ENCODE measurements at regions of chr17 and their contacts with region 1.

Region 1: DNA sequence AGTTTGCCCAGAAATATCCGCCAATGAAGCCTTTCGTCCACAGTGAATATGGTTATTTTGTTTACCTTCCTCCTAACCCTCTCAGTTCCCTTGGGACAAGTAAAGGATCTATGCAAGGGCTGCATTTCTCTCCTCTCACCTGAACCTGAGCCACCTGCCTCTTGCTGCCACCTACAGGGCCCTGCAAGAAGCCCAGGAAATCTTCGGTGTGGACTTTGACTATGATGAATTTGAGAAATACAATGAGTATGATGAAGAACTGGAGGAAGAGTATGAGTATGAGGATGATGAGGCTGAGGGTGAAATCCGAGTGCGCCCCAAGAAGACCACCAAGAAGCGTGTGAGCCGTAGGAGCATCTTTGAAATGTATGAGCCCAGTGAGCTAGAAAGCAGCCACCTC is 14.0 kb downstream of the SUPT6H start:
- DNase-seq: no peak
- CTCF ChIP-seq: peak; percentile 49

Region 2: DNA sequence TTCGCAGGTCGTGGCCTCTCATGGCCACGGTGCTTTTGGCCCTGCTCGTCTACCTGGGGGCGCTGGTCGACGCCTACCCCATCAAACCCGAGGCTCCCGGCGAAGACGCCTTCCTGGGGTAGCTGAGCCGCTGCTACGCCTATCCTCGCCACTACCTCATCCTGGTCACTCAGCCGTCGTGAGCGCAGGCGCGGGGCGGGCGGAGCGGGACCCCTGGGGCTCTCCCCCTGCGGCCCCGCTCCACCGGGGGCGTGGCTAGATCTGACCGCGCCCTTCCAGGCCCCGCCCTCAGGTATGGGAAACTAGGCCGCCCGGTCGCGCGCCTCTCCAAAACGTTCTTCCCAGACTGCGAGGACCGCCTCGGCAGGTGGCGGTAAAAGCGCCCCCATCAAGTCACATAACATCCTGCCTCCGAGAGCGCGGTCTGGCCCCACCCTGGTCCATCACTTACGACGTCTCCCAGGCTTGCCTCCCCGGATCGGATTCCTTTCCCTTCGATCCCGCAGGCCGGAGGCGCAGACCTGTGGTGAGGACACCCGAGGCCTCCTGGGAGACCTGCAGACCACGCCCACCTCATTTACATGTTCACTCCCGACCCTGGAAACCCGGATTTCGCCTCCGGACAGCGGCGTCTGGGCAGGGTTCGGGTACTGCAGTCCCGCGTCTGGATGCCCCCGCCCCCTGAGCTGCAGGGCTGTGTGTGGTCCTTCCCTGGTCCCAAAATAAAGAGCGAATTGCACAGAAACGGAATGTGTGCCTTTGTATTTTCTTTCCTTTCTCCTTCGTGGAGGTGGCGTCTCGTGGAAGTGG is 448.5 kb before region 1 on chr17:
- CTCF ChIA-PET with region 1: no interaction called
- POLR2A ChIA-PET with region 1: no interaction called
- DNase-seq: no peak
- CTCF ChIP-seq: no peak

Region 3: DNA sequence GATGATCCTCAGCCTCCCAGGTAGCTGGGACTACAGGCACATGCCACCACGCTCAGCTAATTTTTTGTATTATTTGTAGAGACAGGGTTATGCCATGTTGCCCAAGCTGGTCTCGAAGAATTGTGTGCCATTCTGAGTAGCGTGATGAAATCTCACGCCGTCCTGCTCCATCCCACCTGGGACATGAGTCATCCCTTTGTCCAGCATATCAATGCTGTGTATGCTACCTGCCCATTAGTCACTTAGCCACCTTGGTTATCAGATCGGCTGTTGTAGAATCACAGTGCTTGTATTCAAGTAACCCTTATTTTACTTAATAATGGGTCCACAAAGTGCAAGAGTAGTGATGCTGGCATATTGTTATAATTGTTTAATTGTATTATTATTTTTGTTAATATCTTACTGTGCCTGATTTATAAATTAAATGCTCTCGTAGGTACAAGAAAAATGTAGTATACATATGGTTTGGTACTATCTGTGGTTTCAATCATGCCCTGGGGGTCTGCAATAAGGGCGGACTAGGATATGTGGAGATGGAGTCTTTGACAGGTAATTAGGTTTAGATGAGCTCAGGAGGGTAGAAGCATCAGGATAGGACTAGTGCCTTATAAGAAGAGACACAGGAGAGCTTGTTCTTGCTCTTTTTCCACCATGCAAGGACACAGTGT is 229.1 kb before region 1 on chr17:
- CTCF ChIA-PET with region 1: no interaction called
- POLR2A ChIA-PET with region 1: interaction called, 12 read pairs
- DNase-seq: no peak
- CTCF ChIP-seq: no peak

Region 4: GRCh38 chr17:28661635-28662537 is 14.1 kb before region 1 on chr17 and contains the starts of genes SDF2 and SUPT6H:
- CTCF ChIA-PET with region 1: interaction called, 16 read pairs
- POLR2A ChIA-PET with region 1: interaction called, 3 read pairs
- DNase-seq: peak; percentile 94
- CTCF ChIP-seq: no peak

Region 5: DNA sequence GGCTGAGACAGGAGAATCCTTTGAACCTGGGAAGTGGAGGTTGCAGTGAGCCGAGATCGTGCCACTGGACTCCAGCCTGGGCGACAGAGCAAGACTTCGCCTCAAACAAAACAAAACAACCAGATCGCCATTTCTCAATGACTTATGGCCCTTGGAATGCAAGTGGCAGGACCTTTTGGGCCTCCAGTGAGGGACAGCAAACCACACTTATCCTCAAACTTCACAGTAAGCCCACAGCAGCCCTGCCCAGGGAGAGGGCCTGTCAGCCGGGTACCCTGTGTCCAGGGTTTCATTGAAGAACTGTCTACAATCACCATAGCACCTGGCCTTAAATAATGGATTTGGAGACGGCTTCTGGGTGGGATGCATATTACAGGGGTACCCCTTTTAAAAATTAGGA is 79.5 kb after region 1 on chr17:
- CTCF ChIA-PET with region 1: no interaction called
- POLR2A ChIA-PET with region 1: no interaction called
- DNase-seq: no peak
- CTCF ChIP-seq: no peak